Panc1 (cell line): ENCODE measurements at regions of chr1 and their contacts with region 1.

Region 1: DNA sequence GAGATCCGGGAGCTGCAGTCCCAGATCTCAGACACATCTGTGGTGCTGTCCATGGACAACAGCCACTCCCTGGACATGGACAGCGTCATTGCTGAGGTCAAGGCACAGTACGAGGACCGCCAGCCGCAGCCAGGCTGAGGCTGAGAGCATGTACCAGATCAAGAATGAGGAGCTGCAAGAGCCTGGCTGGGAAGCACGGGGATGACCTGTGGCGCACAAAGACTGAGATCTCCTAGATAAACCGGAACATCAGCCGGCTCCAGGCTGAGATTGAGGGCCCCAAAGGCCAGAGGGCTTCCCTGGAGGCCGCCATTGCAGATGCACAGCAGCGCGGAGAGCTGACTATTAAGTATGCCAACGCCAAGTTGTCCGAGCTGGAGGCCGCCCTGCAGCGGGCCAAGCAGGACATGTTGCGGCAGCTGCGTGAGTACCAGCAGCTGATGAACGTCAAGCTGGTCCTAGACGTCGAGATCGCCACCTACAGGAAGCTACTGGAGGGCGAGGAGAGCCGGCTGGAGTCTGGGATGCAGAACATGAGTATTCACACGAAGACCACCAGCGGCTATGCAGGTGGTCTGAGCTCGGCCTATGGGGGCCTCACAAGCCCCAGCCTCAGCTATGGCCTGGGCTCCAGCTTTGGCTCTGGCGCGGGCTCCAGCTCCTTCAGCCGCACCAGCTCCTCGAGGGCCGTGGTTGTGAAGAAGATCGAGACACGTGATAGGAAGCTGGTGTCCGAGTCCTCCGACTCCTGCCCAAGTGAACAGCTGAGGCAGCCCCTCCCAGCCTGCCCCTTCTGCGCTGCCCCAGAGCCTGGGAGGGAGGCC is 25.5 kb downstream of the ETV3L start:
- DNase-seq: no peak
- ATAC-seq: peak; percentile 86
- H3K4me3 ChIP-seq: peak overlapping the region; percentile 7 to 37; a peak in 1 of 4 replicates
- H3K27ac ChIP-seq: no peak overlapping the region
- H3K4me1 ChIP-seq: no peaks in the 10 kb centered on the region
- H3K27me3 ChIP-seq: peaks cover 7% of the 10 kb centered on the region; the same call in 1 of the 2 replicates
- CTCF ChIP-seq: peak; percentile 77

Region 2: GRCh38 chr1:156821801-156822200 is 252.4 kb before region 1 on chr1:
- CTCF ChIA-PET with region 1: interaction called, 10 read pairs
- POLR2A ChIA-PET with region 1: no interaction called
- in situ Hi-C with region 1: no loop called
- intact Hi-C with region 1: no loop called
- DNase-seq: no peak
- ATAC-seq: no peak
- H3K4me3 ChIP-seq: no peak overlapping the region
- H3K27ac ChIP-seq: no peak overlapping the region
- H3K4me1 ChIP-seq: no peaks in the 10 kb centered on the region
- H3K27me3 ChIP-seq: peaks cover 10% of the 10 kb centered on the region
- CTCF ChIP-seq: no peak

Region 3: GRCh38 chr1:156927215-156928042 is 146.7 kb before region 1 on chr1:
- CTCF ChIA-PET with region 1: interaction called, 10 read pairs
- POLR2A ChIA-PET with region 1: no interaction called
- in situ Hi-C with region 1: no loop called
- intact Hi-C with region 1: no loop called
- DNase-seq: peak; percentile 39
- ATAC-seq: peak; percentile 93
- H3K4me3 ChIP-seq: peak overlapping the region; percentile 50 to 60
- H3K27ac ChIP-seq: peak overlapping the region; percentile 44; the same call in 1 of the 2 replicates
- H3K4me1 ChIP-seq: peaks cover 3% of the 10 kb centered on the region; the same call in 1 of the 2 replicates
- H3K27me3 ChIP-seq: no peaks in the 10 kb centered on the region
- CTCF ChIP-seq: peak; percentile 97

Region 4: DNA sequence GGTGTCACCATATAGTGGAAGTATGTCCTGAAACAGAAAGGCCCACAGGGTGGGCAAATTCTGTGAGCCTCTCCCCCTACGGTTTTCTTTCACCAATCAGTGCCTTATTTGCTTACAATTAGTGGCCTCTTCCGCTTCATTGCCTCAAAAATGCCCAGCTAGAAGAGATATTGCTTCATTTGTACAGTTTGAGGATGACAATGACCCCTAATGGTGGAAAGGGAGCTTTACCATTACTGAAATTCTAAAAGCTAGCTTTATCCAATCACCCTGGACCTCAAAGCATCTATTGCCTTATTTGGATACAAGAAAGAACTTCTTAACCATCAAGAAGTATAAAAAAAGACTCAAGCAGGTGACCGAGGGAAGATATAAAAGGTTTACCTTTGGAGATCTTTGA is 104.1 kb before region 1 on chr1:
- CTCF ChIA-PET with region 1: no interaction called
- POLR2A ChIA-PET with region 1: interaction called, 6 read pairs
- in situ Hi-C with region 1: no loop called
- intact Hi-C with region 1: loop called (anchors 10 kb)
- DNase-seq: no peak
- ATAC-seq: no peak
- H3K4me3 ChIP-seq: no peak overlapping the region
- H3K27ac ChIP-seq: no peak overlapping the region
- H3K4me1 ChIP-seq: no peaks in the 10 kb centered on the region
- H3K27me3 ChIP-seq: no peaks in the 10 kb centered on the region
- CTCF ChIP-seq: peak; percentile 28; the same call in 1 of the 2 replicates

Region 5: DNA sequence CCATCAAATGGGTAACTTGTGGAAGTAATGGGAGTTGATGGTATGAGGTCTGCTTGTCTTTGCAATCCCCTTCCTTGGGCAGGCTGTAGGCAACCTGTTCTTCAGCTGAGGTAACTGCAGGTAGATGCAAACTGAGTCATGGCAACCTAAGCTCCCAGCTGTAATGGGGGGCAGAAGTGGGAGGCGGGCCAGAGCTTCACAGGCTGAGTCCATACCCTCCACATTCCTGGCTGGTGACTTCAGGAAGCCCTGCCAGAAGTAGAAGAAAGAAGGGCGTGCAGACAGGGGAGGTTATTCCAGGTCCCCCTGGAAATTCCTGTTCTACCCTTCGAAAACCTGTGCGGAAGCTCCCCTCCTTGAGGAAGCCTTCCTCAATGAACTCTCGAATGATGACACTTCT is 73.5 kb before region 1 on chr1:
- CTCF ChIA-PET with region 1: interaction called, 3 read pairs
- POLR2A ChIA-PET with region 1: no interaction called
- in situ Hi-C with region 1: no loop called
- intact Hi-C with region 1: loop called (anchors 10 kb)
- DNase-seq: no peak
- ATAC-seq: no peak
- H3K4me3 ChIP-seq: no peak overlapping the region
- H3K27ac ChIP-seq: no peak overlapping the region
- H3K4me1 ChIP-seq: 0 out of 2 replicates have a peak, but pooled peaks cover 2% of the 10 kb centered on the region
- H3K27me3 ChIP-seq: no peaks in the 10 kb centered on the region
- CTCF ChIP-seq: no peak